ENCODE measurements at regions of chr1 and their contacts with region 1.

Region 1: DNA sequence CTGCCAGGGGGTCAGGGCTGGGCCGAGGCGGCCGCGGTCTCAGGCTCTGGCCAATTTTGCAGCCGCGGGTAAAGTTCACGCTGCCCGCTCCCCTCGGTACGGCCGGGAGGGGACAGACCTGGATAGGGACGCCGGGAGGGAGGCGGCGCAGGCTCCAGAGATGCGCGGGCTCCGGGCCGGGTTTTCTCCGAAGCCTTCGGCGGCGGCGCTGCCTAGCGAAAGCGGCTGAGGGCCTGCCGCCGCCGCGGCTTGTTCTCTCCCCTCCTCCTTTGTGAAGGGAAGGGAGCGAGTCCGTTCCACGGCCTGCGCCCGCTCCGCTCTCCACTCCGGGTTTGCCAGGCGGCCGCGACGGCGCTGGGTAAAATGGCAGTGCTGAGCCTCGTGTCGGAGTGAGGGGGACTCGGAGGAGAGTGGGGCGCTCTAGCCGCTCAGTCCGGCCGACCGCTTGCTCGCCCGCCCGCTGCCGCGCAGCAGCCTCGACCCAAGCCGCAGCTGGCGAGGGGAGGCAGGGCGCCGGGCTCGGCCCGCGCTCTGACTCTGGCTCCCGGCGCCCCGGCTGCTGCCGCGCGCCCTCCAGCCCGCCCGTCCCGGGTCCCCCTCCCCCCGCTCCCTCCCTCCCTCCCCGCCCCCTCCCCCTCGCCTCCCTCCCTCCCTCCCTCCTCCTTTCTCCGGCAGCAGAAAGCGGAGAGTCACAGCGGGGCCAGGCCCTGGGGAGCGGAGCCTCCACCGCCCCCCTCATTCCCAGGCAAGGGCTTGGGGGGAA is at the start of gene ARID1A:
- DNase-seq: peak; percentile 94 to 98 (median 98)
- ATAC-seq: peak; percentile 81
- H3K4me3 ChIP-seq: peak within 1 kb of the TSS; percentile 81
- H3K4me3 Mint-ChIP-seq: peak within 1 kb of the TSS in 9 of 10 donors; percentile 94 to 97 (median 94)
- H3K27ac ChIP-seq: peak within 1 kb of the TSS; percentile 83
- H3K27ac Mint-ChIP-seq: peak within 1 kb of the TSS; percentile 93 to 98 (median 95)
- H3K4me1 ChIP-seq: peaks cover 36 to 39% of the 10 kb centered on the region in 2 donors
- H3K4me1 Mint-ChIP-seq: peaks cover 14 to 35% (median 31%) of the 10 kb centered on the region in 7 donors
- H3K27me3 ChIP-seq: no peaks in the 10 kb centered on the region
- H3K27me3 Mint-ChIP-seq: no peaks in the 10 kb centered on the region
- total RNA-seq, gene ARID1A: 118 to 148 (median 131) TPM

Region 2: GRCh38 chr1:26306290-26307229 is 389.0 kb before region 1 on chr1 and contains the start of gene UBXN11:
- CTCF ChIA-PET with region 1: no interaction called
- POLR2A ChIA-PET with region 1: no interaction called
- intact Hi-C with region 1: loop called in 1 of 2 experiments (anchors 5 kb)
- DNase-seq: peak; percentile 66 to 95 (median 89)
- ATAC-seq: peak; percentile 99
- H3K4me3 ChIP-seq: peak within 1 kb of the TSS; percentile 87
- H3K4me3 Mint-ChIP-seq: peak within 1 kb of the TSS; percentile 93 to 99 (median 98)
- H3K27ac ChIP-seq: peak within 1 kb of the TSS; percentile 76
- H3K27ac Mint-ChIP-seq: peak within 1 kb of the TSS; percentile 90 to 99 (median 96)
- H3K4me1 ChIP-seq: peaks cover 16 to 31% of the 10 kb centered on the region in 2 donors
- H3K4me1 Mint-ChIP-seq: peaks cover 25 to 58% (median 34%) of the 10 kb centered on the region in 7 donors
- H3K27me3 ChIP-seq: no peaks in the 10 kb centered on the region
- H3K27me3 Mint-ChIP-seq: no peaks in the 10 kb centered on the region
- total RNA-seq, gene UBXN11: 35.7 to 131 (median 124) TPM

Region 3: DNA sequence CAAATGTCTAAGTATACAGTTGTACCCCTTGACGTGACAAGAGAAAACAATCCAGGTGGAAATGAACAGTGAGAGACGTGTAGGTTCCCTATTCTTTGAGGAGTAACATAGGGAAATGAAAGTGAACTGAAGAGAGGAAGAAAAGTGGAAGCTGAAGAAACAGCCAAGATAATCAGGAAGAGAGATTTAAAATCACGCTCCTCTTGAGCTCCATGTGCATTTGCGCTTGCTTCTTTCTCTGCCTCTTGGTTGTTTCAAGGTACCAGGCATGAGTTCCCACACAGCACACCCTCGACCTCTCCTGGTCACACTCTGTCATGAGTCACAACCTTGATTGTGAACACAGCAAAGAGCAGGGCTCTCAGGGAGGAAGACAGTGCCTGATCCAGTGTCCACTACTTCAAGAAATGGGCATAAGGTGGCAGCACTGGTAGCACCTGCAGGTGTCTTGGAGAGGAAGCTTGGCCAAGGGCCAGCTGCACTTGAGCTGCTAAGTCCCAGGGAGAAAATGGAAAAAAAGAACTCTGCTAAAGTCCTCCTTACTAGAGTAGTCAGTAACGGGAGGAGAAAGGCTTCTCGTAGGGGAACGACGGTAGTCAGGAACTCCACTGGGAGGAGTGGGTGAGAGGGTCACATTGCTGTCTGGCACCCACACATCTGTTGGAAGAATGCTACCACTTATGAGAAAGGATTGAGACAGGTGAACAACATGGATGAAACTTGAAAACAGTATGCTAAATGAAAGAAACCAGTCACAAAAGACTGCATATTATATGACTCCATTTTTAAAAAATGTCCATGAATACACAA is 18.0 kb before region 1 on chr1:
- CTCF ChIA-PET with region 1: interaction called, 33 read pairs
- POLR2A ChIA-PET with region 1: interaction called, 61 read pairs
- intact Hi-C with region 1: loop called (anchors 1 to 2 kb)
- DNase-seq: peak; percentile 23 to 62 (median 50)
- ATAC-seq: peak; percentile 96
- H3K4me3 ChIP-seq: no peak overlapping the region
- H3K4me3 Mint-ChIP-seq: peak overlapping the region; percentile 36 to 83 (median 67)
- H3K27ac ChIP-seq: no peak overlapping the region
- H3K27ac Mint-ChIP-seq: peak overlapping the region; percentile 6 to 89 (median 78)
- H3K4me1 ChIP-seq: peaks cover 0 to 13% of the 10 kb centered on the region in 2 donors
- H3K4me1 Mint-ChIP-seq: peaks cover 11 to 24% (median 17%) of the 10 kb centered on the region in 7 donors
- H3K27me3 ChIP-seq: no peaks in the 10 kb centered on the region
- H3K27me3 Mint-ChIP-seq: no peaks in the 10 kb centered on the region

Region 4: GRCh38 chr1:26733982-26734381 is 38.4 kb after region 1 on chr1:
- CTCF ChIA-PET with region 1: interaction called, 12 read pairs
- POLR2A ChIA-PET with region 1: interaction called, 31 read pairs
- intact Hi-C with region 1: no loop called
- DNase-seq: no peak
- ATAC-seq: peak; percentile 38
- H3K4me3 ChIP-seq: no peak overlapping the region
- H3K4me3 Mint-ChIP-seq: peak overlapping the region in 9 of 10 donors; percentile 5 to 72 (median 36)
- H3K27ac ChIP-seq: peak overlapping the region; percentile 45
- H3K27ac Mint-ChIP-seq: peak overlapping the region; percentile 62 to 89 (median 79)
- H3K4me1 ChIP-seq: peaks cover 20 to 27% of the 10 kb centered on the region in 2 donors
- H3K4me1 Mint-ChIP-seq: peaks cover 42 to 78% (median 65%) of the 10 kb centered on the region in 7 donors
- H3K27me3 ChIP-seq: no peaks in the 10 kb centered on the region
- H3K27me3 Mint-ChIP-seq: no peaks in the 10 kb centered on the region

Region 5: GRCh38 chr1:26780344-26780957 is 84.9 kb after region 1 on chr1:
- CTCF ChIA-PET with region 1: interaction called, 60 read pairs
- POLR2A ChIA-PET with region 1: interaction called, 383 read pairs
- intact Hi-C with region 1: no loop called
- DNase-seq: no peak
- ATAC-seq: no peak
- H3K4me3 ChIP-seq: no peak overlapping the region
- H3K4me3 Mint-ChIP-seq: no peak overlapping the region
- H3K27ac ChIP-seq: no peak overlapping the region
- H3K27ac Mint-ChIP-seq: peak overlapping the region in 5 of 9 donors; percentile 48 to 100 (median 74)
- H3K4me1 ChIP-seq: peaks cover 3 to 13% of the 10 kb centered on the region in 2 donors
- H3K4me1 Mint-ChIP-seq: peaks cover 19 to 57% (median 53%) of the 10 kb centered on the region in 7 donors
- H3K27me3 ChIP-seq: no peaks in the 10 kb centered on the region
- H3K27me3 Mint-ChIP-seq: no peaks in the 10 kb centered on the region

Region 6: DNA sequence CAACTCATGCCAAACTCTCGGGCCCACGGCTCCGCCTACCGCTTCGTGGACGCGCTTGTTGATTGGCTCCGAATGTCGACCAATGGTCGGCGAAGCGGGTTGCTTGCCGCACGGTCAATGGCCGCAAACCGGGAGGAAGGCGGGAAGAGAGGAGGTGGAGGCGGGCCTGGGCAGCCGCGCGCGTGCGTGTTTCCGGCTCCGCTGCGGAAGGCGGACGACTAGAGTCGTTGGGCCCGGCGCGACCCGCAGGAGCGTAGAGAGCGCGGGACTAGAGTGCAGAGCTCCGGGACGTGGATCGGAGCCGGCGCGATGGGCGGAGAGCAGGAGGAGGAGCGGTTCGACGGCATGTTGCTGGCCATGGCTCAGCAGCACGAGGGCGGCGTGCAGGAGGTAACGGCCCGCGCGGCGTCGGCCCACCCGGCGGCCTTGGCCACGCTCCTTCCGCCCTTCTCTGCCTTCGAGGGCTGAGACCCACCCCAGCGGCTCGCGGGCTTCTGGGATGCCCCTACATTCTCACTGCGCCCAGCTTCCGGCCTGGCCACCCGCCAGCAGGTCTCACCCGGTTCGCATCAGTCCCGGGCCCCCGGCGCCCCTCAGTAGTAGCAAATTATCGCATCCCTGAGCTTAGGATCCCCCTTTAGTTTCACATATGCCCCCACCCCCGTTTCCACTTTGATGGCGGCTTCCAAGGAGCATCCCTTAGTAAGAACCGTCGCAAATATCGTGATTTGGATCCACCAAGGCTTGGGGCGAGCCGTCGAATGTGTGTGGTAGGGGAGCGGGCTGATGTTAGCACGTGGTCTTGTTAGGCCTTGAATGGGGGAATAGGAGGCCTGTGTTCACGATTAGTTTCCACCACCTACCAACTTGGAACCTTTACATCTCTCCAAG is 226.2 kb after region 1 on chr1 and contains the start of gene NUDC:
- CTCF ChIA-PET with region 1: no interaction called
- POLR2A ChIA-PET with region 1: no interaction called
- intact Hi-C with region 1: loop called in 1 of 2 experiments (anchors 1 kb)
- DNase-seq: peak; percentile 87 to 97 (median 95)
- ATAC-seq: peak; percentile 97
- H3K4me3 ChIP-seq: peak within 1 kb of the TSS; percentile 79
- H3K4me3 Mint-ChIP-seq: peak within 1 kb of the TSS; percentile 82 to 98 (median 94)
- H3K27ac ChIP-seq: peak within 1 kb of the TSS; percentile 88
- H3K27ac Mint-ChIP-seq: peak within 1 kb of the TSS; percentile 88 to 98 (median 96)
- H3K4me1 ChIP-seq: peaks cover 11 to 12% of the 10 kb centered on the region in 2 donors
- H3K4me1 Mint-ChIP-seq: peaks cover 12 to 46% (median 34%) of the 10 kb centered on the region in 7 donors
- H3K27me3 ChIP-seq: no peaks in the 10 kb centered on the region
- H3K27me3 Mint-ChIP-seq: no peaks in the 10 kb centered on the region
- total RNA-seq, gene NUDC: 36.5 to 69.0 (median 40.5) TPM